Activated T-helper 2 cell treated with anti-CD3 and anti-CD28 coated beads, Interferon-gamma antibody, Interleukin-2, Interleukin-4, amounts not matched to agents 10 μg/mL and 5 μg/mL and 100 μg/mL, durations not matched to agents 14 hours and 24 hours and 36 hours (primary cell): ENCODE measurements at regions of chr1 and their contacts with region 1.

Region 1: GRCh38 chr1:40161125-40161887 is at the start of gene RLF:
- DNase-seq: peak; percentile 94
- H3K4me3 Mint-ChIP-seq: no peak within 1 kb of the TSS
- H3K27ac Mint-ChIP-seq: no peak within 1 kb of the TSS
- H3K4me1 Mint-ChIP-seq: peaks cover 16% of the 10 kb centered on the region
- H3K27me3 Mint-ChIP-seq: peaks cover 3% of the 10 kb centered on the region
- total RNA-seq, gene RLF: 22.3 and 22.6 TPM in 2 replicates

Region 2: GRCh38 chr1:39653546-39654031 is 507.7 kb before region 1 on chr1:
- intact Hi-C with region 1: no loop called
- DNase-seq: peak; percentile 60
- H3K4me3 Mint-ChIP-seq: no peak overlapping the region
- H3K27ac Mint-ChIP-seq: no peak overlapping the region
- H3K4me1 Mint-ChIP-seq: peaks cover 20% of the 10 kb centered on the region
- H3K27me3 Mint-ChIP-seq: no peaks in the 10 kb centered on the region

Region 3: GRCh38 chr1:40040511-40041465 is 120.5 kb before region 1 on chr1 and contains the start of gene CAP1:
- intact Hi-C with region 1: loop called (anchors 10 kb)
- DNase-seq: peak; percentile 100
- H3K4me3 Mint-ChIP-seq: peak within 1 kb of the TSS; percentile 94
- H3K27ac Mint-ChIP-seq: peak within 1 kb of the TSS; percentile 99
- H3K4me1 Mint-ChIP-seq: peaks cover 55% of the 10 kb centered on the region
- H3K27me3 Mint-ChIP-seq: no peaks in the 10 kb centered on the region
- total RNA-seq, gene CAP1: 512 and 520 TPM in 2 replicates

Region 4: GRCh38 chr1:40241362-40241761 is 80.1 kb after region 1 on chr1:
- intact Hi-C with region 1: loop called (anchors 1 kb)
- DNase-seq: no peak
- H3K4me3 Mint-ChIP-seq: peak overlapping the region; percentile 59
- H3K27ac Mint-ChIP-seq: peak overlapping the region; percentile 83
- H3K4me1 Mint-ChIP-seq: peaks cover 59% of the 10 kb centered on the region
- H3K27me3 Mint-ChIP-seq: no peaks in the 10 kb centered on the region

Region 5: GRCh38 chr1:40267767-40268187 is 106.5 kb after region 1 on chr1:
- intact Hi-C with region 1: loop called (anchors 2 kb)
- DNase-seq: no peak
- H3K4me3 Mint-ChIP-seq: no peak overlapping the region
- H3K27ac Mint-ChIP-seq: no peak overlapping the region
- H3K4me1 Mint-ChIP-seq: peaks cover 44% of the 10 kb centered on the region
- H3K27me3 Mint-ChIP-seq: no peaks in the 10 kb centered on the region

Region 6: GRCh38 chr1:40385437-40386358 is 224.4 kb after region 1 on chr1:
- intact Hi-C with region 1: loop called (anchors 5 kb)
- DNase-seq: peak; percentile 59
- H3K4me3 Mint-ChIP-seq: peak overlapping the region; percentile 85
- H3K27ac Mint-ChIP-seq: peak overlapping the region; percentile 99
- H3K4me1 Mint-ChIP-seq: peaks cover 86% of the 10 kb centered on the region
- H3K27me3 Mint-ChIP-seq: no peaks in the 10 kb centered on the region